ENCODE measurements at regions of chr6 and their contacts with region 1.

Region 1: DNA sequence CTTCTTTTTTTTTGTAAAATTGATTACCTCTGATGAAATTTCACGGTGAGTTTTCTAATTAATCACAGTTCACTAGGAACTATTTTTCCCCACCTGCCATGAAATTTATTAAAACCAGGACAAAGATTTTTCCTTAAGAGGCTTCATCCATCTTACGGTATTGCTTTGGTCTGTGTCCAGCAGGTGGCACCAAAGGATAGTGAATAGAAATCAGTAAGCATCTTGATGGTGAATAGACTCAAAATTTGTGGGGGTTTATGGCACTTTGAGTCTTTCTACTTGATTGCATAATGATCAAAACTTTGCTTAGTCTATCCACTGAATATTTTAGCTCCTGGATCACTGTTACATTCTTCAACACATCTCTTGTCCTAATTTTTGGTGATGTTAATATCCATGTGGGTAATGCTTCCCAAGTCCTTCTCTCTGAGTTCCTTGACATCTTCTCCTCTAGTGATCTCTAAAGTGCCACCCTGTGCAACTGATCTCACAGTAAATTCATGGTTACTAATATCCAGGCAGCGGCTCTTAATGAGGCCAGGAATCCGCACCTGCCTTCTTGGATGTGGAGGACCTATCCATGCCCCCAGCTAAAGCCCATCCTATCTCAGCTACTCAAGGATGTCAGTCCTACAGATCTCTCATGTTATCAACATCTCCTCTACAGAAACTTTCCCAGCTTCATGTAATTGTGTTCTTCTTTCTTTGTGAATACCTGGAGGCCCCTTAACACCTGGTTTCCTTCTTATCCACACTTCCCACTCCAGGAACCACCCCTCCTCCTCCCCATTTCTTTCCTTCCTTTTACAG is 54.5 kb downstream of the STMND1 start:
- DNase-seq: peak; percentile 82
- H3K4me3 ChIP-seq: no peak overlapping the region
- H3K27ac ChIP-seq: no peak overlapping the region
- H3K4me1 ChIP-seq: no peaks in the 10 kb centered on the region
- H3K27me3 ChIP-seq: peaks cover 3 to 13% of the 10 kb centered on the region in 2 experiments
- CTCF ChIP-seq: peak; percentile 47 to 60
- POLR2A ChIP-seq: no peak

Region 2: GRCh38 chr6:17281100-17281494 is 124.8 kb after region 1 on chr6 and contains the start of gene RBM24:
- CTCF ChIA-PET with region 1: no interaction called
- POLR2A ChIA-PET with region 1: no interaction called
- dilution Hi-C with region 1: no loop called
- intact Hi-C with region 1: loop called (anchors 1 kb)
- DNase-seq: peak; percentile 57
- H3K4me3 ChIP-seq: peak within 1 kb of the TSS; percentile 49 to 80 (median 66)
- H3K27ac ChIP-seq: no peak within 1 kb of the TSS
- H3K4me1 ChIP-seq: peaks cover 15% of the 10 kb centered on the region
- H3K27me3 ChIP-seq: no peaks in the 10 kb centered on the region
- CTCF ChIP-seq: peak; percentile 14 to 54
- POLR2A ChIP-seq: no peak
- total RNA-seq, gene RBM24: 6.0 and 6.7 TPM in 2 replicates

Region 3: GRCh38 chr6:17469006-17469832 is 312.9 kb after region 1 on chr6:
- CTCF ChIA-PET with region 1: no interaction called
- POLR2A ChIA-PET with region 1: no interaction called
- dilution Hi-C with region 1: no loop called
- intact Hi-C with region 1: loop called (anchors 1 kb)
- DNase-seq: peak; percentile 85
- H3K4me3 ChIP-seq: no peak overlapping the region
- H3K27ac ChIP-seq: no peak overlapping the region
- H3K4me1 ChIP-seq: peaks cover 4% of the 10 kb centered on the region
- H3K27me3 ChIP-seq: no peaks in the 10 kb centered on the region
- CTCF ChIP-seq: peak; percentile 39 to 62
- POLR2A ChIP-seq: no peak

Region 4: DNA sequence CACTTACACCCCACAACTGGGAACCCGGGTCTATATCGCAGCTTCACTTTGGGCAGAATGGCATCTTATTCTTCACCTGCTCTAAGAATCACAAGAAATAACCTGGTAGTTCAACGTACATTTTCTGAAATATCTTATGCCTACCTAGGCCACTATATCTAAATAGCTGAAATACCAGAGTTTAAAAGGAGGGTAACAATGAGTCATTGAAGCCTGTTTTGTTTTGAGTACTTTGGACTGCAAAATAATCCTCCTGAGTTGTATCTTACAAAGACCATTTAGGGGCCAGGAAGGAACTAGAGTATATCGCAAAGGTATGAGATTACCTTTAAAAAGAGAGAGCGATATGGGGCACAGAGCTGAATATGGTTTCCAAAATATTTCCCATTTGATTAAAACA is 647.1 kb after region 1 on chr6:
- CTCF ChIA-PET with region 1: interaction called, 14 read pairs
- POLR2A ChIA-PET with region 1: no interaction called
- dilution Hi-C with region 1: no loop called
- intact Hi-C with region 1: loop called (anchors 2 kb)
- DNase-seq: no peak
- H3K4me3 ChIP-seq: no peak overlapping the region
- H3K27ac ChIP-seq: no peak overlapping the region
- H3K4me1 ChIP-seq: peaks cover under 1% of the 10 kb centered on the region
- H3K27me3 ChIP-seq: no peaks in the 10 kb centered on the region
- CTCF ChIP-seq: no peak
- POLR2A ChIP-seq: no peak

Region 5: GRCh38 chr6:17808609-17809008 is 652.3 kb after region 1 on chr6:
- CTCF ChIA-PET with region 1: interaction called, 14 read pairs
- POLR2A ChIA-PET with region 1: no interaction called
- dilution Hi-C with region 1: no loop called
- intact Hi-C with region 1: loop called (anchors 2 kb)
- DNase-seq: no peak
- H3K4me3 ChIP-seq: no peak overlapping the region
- H3K27ac ChIP-seq: no peak overlapping the region
- H3K4me1 ChIP-seq: peaks cover 8% of the 10 kb centered on the region
- H3K27me3 ChIP-seq: no peaks in the 10 kb centered on the region
- CTCF ChIP-seq: no peak
- POLR2A ChIP-seq: no peak

Region 6: GRCh38 chr6:17820055-17820454 is 663.7 kb after region 1 on chr6:
- CTCF ChIA-PET with region 1: interaction called, 3 read pairs
- POLR2A ChIA-PET with region 1: no interaction called
- dilution Hi-C with region 1: no loop called
- intact Hi-C with region 1: loop called (anchors 5 kb)
- DNase-seq: no peak
- H3K4me3 ChIP-seq: no peak overlapping the region
- H3K27ac ChIP-seq: no peak overlapping the region
- H3K4me1 ChIP-seq: no peaks in the 10 kb centered on the region
- H3K27me3 ChIP-seq: no peaks in the 10 kb centered on the region
- CTCF ChIP-seq: no peak
- POLR2A ChIP-seq: no peak

Region 7: GRCh38 chr6:18122124-18123093 is 966.1 kb after region 1 on chr6 and contains the start of gene NHLRC1:
- CTCF ChIA-PET with region 1: no interaction called
- POLR2A ChIA-PET with region 1: no interaction called
- dilution Hi-C with region 1: no loop called
- intact Hi-C with region 1: loop called (anchors 2 kb)
- DNase-seq: peak; percentile 92
- H3K4me3 ChIP-seq: peak within 1 kb of the TSS in 1 of 3 experiments; percentile 35
- H3K27ac ChIP-seq: no peak within 1 kb of the TSS
- H3K4me1 ChIP-seq: peaks cover 5% of the 10 kb centered on the region
- H3K27me3 ChIP-seq: no peaks in the 10 kb centered on the region
- CTCF ChIP-seq: peak; percentile 94 to 97
- POLR2A ChIP-seq: peak; percentile 65
- total RNA-seq, gene NHLRC1: 2.2 and 2.3 TPM in 2 replicates

Measured in endothelial cell of umbilical vein (primary cell).